GM23248 (cell line): ENCODE measurements at regions of chr16 and their contacts with region 1.

Region 1: DNA sequence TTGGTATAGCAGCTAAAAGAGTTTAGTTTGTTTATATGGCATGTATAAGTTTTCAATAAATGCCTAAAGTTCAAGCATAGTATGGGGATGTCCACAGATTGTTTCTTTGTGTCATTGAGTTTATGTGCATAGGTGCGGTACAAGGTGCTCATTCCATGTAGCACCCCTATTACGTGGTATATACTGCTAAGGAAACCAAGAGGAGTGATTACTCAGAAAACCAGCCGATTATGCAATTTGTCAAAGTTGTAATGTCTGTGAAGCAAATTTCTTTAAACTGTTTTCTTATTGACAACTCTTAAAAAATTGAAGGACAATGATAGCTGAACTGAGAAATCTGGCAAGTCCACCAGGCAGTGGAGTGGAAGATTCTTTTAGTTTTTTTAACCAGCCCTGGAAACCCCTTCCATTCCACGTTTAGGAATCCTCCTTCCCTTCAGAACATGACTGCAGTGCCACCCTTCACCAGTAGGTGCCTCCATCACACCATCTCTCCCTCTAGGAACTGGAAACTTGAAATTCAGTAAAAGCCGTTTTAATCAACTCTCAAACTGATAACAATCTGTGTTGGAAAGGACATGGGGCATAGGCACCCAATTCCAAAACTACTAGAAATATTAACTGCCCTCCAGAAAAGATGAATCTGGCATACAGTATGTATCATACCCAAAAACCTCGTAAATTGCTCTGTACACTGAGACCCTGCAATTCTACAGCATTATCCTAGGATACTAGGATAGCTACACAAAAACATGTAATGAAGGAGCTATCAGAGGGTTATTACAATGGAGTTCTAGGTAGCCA is 43.5 kb downstream of the REXO5 start:
- DNase-seq: peak; percentile 74
- H3K4me3 ChIP-seq: no peak overlapping the region
- H3K27ac ChIP-seq: no peak overlapping the region
- H3K4me1 ChIP-seq: peaks cover 53% of the 10 kb centered on the region
- H3K27me3 ChIP-seq: no peaks in the 10 kb centered on the region

Region 2: GRCh38 chr16:20660325-20660724 is 189.5 kb before region 1 on chr16:
- in situ Hi-C with region 1: no loop called
- DNase-seq: no peak
- H3K4me3 ChIP-seq: no peak overlapping the region
- H3K27ac ChIP-seq: no peak overlapping the region
- H3K4me1 ChIP-seq: no peaks in the 10 kb centered on the region
- H3K27me3 ChIP-seq: no peaks in the 10 kb centered on the region

Region 3: DNA sequence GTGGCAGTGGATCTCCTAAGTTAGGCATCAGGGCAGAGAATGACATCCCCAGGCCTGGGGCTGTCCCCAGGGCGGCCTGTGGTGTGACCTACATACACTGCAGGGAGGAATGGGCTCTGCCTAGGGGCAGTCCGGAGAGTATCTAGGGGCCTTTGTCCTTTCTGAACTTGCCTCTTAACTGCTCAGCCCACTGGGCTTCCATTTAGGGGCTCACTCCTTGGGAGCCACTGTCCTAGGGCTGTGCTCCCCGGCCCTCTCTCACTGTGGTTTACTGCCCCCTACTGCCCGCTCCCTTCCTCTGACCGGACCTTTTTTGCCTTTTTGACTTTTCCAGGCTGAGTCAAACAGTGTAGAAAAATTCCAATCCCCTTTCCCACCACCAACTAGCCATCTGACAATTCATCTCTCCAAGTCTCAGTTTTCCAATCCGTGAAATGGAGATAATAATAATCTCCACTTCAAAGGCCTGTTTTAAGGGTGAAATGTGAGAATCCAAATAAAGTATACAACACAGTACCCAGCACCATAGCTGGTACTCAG is 234.0 kb after region 1 on chr16:
- in situ Hi-C with region 1: loop called (anchors 5 kb)
- DNase-seq: peak; percentile 78
- H3K4me3 ChIP-seq: no peak overlapping the region
- H3K27ac ChIP-seq: no peak overlapping the region
- H3K4me1 ChIP-seq: no peaks in the 10 kb centered on the region; the same call in none of the 2 replicates
- H3K27me3 ChIP-seq: no peaks in the 10 kb centered on the region

Region 4: DNA sequence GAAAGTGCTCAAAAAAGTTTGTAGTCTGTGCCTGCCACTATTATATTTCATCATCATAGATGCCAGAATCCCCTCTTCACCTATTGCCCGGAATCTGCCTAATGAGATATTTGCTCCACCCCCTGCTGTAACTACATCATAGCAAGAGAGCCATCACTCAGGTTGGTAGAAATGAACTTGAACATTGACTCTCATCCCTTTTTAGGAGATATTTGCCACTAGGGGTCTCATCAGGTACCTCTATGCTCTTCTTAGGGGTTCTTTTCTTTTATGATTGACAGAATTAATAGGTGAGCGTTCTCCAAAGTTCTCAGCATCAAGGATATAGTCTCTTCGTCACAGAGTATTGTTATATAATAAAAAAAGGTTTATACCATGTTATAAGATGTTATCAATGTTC is 403.7 kb after region 1 on chr16:
- in situ Hi-C with region 1: no loop called
- DNase-seq: no peak
- H3K4me3 ChIP-seq: no peak overlapping the region
- H3K27ac ChIP-seq: no peak overlapping the region
- H3K4me1 ChIP-seq: no peaks in the 10 kb centered on the region
- H3K27me3 ChIP-seq: peaks cover 27% of the 10 kb centered on the region